ENCODE measurements at regions of chr3 and their contacts with region 1.

Region 1: DNA sequence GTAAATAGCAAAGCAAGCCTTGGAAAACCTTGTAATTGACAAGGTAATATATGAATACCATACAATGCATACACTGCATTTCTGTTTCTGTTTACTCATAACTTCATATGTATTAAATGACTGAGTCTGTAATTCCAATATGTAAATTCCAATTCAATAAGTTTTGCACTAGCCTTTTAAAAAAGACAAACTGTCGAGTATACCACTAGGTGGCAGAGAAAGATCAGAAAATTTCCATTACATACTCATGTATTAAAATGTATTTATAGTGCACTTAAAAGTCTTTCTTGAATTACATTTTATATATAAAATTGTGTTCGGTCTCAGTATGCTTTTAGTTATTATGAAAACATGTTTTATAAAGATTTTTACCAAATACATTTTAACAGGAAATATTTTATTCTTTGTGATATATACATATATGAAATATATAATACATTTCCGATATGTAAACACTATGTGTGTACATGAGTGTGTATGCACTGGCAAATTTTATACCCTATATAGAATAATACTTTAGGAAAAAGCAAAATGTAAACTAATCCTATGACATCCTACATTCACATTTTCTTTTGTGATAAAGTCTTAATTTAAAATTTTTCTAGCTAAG is 216.8 kb downstream of the VGLL3 start:
- DNase-seq: no peak
- ATAC-seq: no peak
- H3K4me3 Mint-ChIP-seq: no peak overlapping the region
- H3K27ac Mint-ChIP-seq: no peak overlapping the region
- H3K4me1 Mint-ChIP-seq: no peaks in the 10 kb centered on the region
- H3K27me3 Mint-ChIP-seq: no peaks in the 10 kb centered on the region
- CTCF ChIP-seq: peak; percentile 25; the same call in 1 of the 2 replicates

Region 2: GRCh38 chr3:87167628-87168456 is 393.7 kb after region 1 on chr3:
- CTCF ChIA-PET with region 1: interaction called, 29 read pairs
- POLR2A ChIA-PET with region 1: no interaction called
- DNase-seq: no peak
- ATAC-seq: peak; percentile 61
- H3K4me3 Mint-ChIP-seq: no peak overlapping the region
- H3K27ac Mint-ChIP-seq: no peak overlapping the region
- H3K4me1 Mint-ChIP-seq: peaks cover 4% of the 10 kb centered on the region
- H3K27me3 Mint-ChIP-seq: no peaks in the 10 kb centered on the region
- CTCF ChIP-seq: peak; percentile 51; the same call in 1 of the 2 replicates

Measured in WTC11 (cell line).